CD4-positive, alpha-beta T cell (primary cell): ENCODE measurements at regions of chr9 and their contacts with region 1.

Region 1: DNA sequence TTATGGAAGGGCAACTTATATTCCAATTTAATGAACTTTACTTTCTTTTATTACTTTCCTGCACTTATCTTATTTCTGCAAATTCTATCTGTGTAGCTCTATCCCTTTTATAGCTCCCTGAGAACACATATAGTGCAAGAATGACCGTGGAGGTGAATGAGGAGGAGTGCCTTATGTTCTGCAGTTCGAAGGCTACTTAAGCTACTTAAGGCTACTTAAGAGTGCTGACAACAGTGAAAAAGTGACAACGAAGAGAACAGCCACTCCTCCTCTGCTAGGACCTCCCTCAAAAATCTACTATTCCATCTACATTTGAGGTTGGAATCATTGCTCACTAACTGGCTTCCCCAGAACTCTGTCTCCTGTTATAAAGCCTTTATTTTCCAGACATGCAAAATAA is 1365.7 kb upstream of the C9orf72 start:
- DNase-seq: no peak
- ATAC-seq: no peak
- H3K4me3 ChIP-seq: no peak overlapping the region
- H3K4me3 Mint-ChIP-seq: no peak overlapping the region
- H3K27ac ChIP-seq: no peak overlapping the region
- H3K27ac Mint-ChIP-seq: no peak overlapping the region
- H3K4me1 ChIP-seq: no peaks in the 10 kb centered on the region
- H3K4me1 Mint-ChIP-seq: no peaks in the 10 kb centered on the region
- H3K27me3 ChIP-seq: no peaks in the 10 kb centered on the region
- H3K27me3 Mint-ChIP-seq: no peaks in the 10 kb centered on the region
- CTCF ChIP-seq: no peak

Region 2: GRCh38 chr9:28887188-28887884 is 51.6 kb before region 1 on chr9:
- CTCF ChIA-PET with region 1: no interaction called
- POLR2A ChIA-PET with region 1: no interaction called
- intact Hi-C with region 1: loop called in 1 of 2 experiments (anchors 5 kb)
- DNase-seq: no peak
- ATAC-seq: no peak
- H3K4me3 ChIP-seq: no peak overlapping the region
- H3K4me3 Mint-ChIP-seq: no peak overlapping the region
- H3K27ac ChIP-seq: no peak overlapping the region
- H3K27ac Mint-ChIP-seq: no peak overlapping the region
- H3K4me1 ChIP-seq: no peaks in the 10 kb centered on the region
- H3K4me1 Mint-ChIP-seq: no peaks in the 10 kb centered on the region
- H3K27me3 ChIP-seq: no peaks in the 10 kb centered on the region
- H3K27me3 Mint-ChIP-seq: no peaks in the 10 kb centered on the region
- CTCF ChIP-seq: no peak

Region 3: DNA sequence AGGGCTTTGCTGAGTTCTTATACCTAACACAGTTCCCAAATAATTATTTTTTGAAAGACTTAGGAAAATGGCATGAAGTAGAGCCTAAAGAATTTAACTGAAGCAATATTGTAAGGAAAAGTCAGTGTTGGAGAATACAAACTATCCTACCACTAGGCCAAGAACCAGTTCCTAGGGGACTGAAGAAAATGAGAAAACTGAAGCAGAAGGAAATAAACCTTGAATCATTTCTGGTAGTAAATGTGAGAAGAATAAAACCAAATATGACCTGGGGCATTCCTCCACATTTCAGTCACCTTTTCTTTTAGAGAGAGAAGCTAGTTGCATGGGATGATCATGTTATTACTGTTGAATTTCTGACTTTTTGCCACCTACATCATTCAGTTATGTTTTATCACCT is 28.2 kb after region 1 on chr9:
- CTCF ChIA-PET with region 1: no interaction called
- POLR2A ChIA-PET with region 1: no interaction called
- intact Hi-C with region 1: loop called in 1 of 2 experiments (anchors 2 kb)
- DNase-seq: no peak
- ATAC-seq: no peak
- H3K4me3 ChIP-seq: no peak overlapping the region
- H3K4me3 Mint-ChIP-seq: no peak overlapping the region
- H3K27ac ChIP-seq: no peak overlapping the region
- H3K27ac Mint-ChIP-seq: no peak overlapping the region
- H3K4me1 ChIP-seq: no peaks in the 10 kb centered on the region
- H3K4me1 Mint-ChIP-seq: no peaks in the 10 kb centered on the region
- H3K27me3 ChIP-seq: no peaks in the 10 kb centered on the region
- H3K27me3 Mint-ChIP-seq: no peaks in the 10 kb centered on the region
- CTCF ChIP-seq: no peak

Region 4: GRCh38 chr9:28981129-28981528 is 42.1 kb after region 1 on chr9:
- CTCF ChIA-PET with region 1: no interaction called
- POLR2A ChIA-PET with region 1: no interaction called
- intact Hi-C with region 1: loop called in 1 of 2 experiments (anchors 5 kb)
- DNase-seq: no peak
- ATAC-seq: no peak
- H3K4me3 ChIP-seq: no peak overlapping the region
- H3K4me3 Mint-ChIP-seq: no peak overlapping the region
- H3K27ac ChIP-seq: no peak overlapping the region
- H3K27ac Mint-ChIP-seq: no peak overlapping the region
- H3K4me1 ChIP-seq: no peaks in the 10 kb centered on the region
- H3K4me1 Mint-ChIP-seq: no peaks in the 10 kb centered on the region
- H3K27me3 ChIP-seq: no peaks in the 10 kb centered on the region
- H3K27me3 Mint-ChIP-seq: no peaks in the 10 kb centered on the region
- CTCF ChIP-seq: no peak

Region 5: DNA sequence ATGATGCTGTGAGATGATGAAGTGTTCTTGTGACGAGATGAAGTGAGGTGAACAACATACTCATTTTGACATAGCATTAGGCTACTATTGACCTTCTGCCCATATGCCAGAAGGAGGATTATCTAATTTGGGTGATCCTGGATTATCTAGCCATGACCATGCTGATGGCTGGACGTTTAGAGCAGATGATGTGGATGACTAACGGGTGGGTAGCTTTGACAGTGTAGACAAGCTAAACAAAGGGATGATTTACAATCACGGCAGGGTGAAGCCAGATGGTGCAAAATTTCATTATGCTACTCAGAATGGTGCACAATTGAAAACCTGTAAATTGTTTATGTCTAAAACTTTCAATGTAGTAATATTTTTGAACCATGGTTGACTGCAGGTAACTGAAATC is 1042.0 kb after region 1 on chr9:
- CTCF ChIA-PET with region 1: no interaction called
- POLR2A ChIA-PET with region 1: no interaction called
- intact Hi-C with region 1: no loop called
- DNase-seq: no peak
- ATAC-seq: no peak
- H3K4me3 ChIP-seq: no peak overlapping the region
- H3K4me3 Mint-ChIP-seq: no peak overlapping the region
- H3K27ac ChIP-seq: no peak overlapping the region
- H3K27ac Mint-ChIP-seq: no peak overlapping the region
- H3K4me1 ChIP-seq: no peaks in the 10 kb centered on the region
- H3K4me1 Mint-ChIP-seq: no peaks in the 10 kb centered on the region
- H3K27me3 ChIP-seq: no peaks in the 10 kb centered on the region
- H3K27me3 Mint-ChIP-seq: no peaks in the 10 kb centered on the region
- CTCF ChIP-seq: no peak